ENCODE measurements at regions of chrX and their contacts with region 1.

Region 1: GRCh38 chrX:106874075-106874474 is 29.1 kb downstream of the RIPPLY1 start:
- DNase-seq: peak in 1 of 2 experiments; percentile 38
- H3K4me3 ChIP-seq: no peak overlapping the region
- H3K27ac ChIP-seq: no peak overlapping the region
- H3K4me1 ChIP-seq: no peaks in the 10 kb centered on the region
- H3K27me3 ChIP-seq: no peaks in the 10 kb centered on the region
- CTCF ChIP-seq: peak; percentile 86

Region 2: GRCh38 chrX:106481341-106481740 is 392.7 kb before region 1 on chrX:
- CTCF ChIA-PET with region 1: no interaction called
- POLR2A ChIA-PET with region 1: no interaction called
- intact Hi-C with region 1: loop called (anchors 10 kb)
- DNase-seq: peak; percentile 20 to 40
- H3K4me3 ChIP-seq: no peak overlapping the region
- H3K27ac ChIP-seq: no peak overlapping the region
- H3K4me1 ChIP-seq: no peaks in the 10 kb centered on the region
- H3K27me3 ChIP-seq: no peaks in the 10 kb centered on the region
- CTCF ChIP-seq: peak; percentile 84